ENCODE measurements at regions of chr15 and their contacts with region 1.

Region 1: DNA sequence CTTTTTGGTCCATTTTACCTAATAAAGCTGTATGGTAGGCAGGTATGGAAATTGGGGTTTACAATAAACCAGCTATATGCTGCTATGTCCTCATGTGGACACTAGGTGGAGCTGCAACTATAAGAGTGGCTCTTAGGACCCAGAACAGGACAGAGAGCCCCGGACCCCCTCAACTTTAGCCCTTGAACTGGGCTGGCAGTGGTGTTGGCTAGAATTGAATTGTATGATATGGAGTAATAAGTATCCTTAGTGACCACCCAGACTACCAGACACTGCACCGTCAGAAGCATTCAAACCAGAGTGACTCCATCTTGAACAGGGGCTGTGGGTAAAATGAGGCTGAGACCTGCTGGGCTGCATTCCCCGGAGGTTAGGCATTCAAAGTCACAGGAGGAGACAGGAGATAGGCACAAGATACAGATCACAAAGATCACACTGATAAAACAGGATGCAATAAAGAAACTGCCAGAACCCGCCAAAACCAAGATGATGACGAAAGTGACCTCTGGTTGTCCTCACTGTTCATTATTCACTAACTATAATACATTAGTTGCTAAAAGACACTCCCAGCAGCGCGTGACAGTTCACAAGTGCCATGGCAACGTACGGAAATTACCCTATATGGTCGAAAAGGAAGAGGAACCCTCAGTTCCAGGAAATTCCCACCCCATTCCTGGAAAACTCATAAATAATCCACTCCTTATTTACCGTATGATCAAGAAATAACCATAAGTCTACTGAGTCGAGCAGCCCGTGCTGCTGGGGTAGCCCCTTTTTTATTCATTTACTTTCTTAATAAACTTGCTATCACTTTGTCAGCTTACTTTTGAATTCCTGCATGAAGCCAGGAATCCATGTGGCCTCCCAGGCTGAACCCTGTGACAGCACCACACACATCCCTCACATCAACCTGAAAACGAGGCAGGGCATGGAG is 68.7 kb upstream of the BLM start:
- DNase-seq: peak; percentile 79
- H3K4me3 Mint-ChIP-seq: peak overlapping the region; percentile 6
- H3K27ac Mint-ChIP-seq: peak overlapping the region; percentile 87
- H3K4me1 Mint-ChIP-seq: peaks cover 42% of the 10 kb centered on the region
- H3K27me3 Mint-ChIP-seq: no peaks in the 10 kb centered on the region

Region 2: DNA sequence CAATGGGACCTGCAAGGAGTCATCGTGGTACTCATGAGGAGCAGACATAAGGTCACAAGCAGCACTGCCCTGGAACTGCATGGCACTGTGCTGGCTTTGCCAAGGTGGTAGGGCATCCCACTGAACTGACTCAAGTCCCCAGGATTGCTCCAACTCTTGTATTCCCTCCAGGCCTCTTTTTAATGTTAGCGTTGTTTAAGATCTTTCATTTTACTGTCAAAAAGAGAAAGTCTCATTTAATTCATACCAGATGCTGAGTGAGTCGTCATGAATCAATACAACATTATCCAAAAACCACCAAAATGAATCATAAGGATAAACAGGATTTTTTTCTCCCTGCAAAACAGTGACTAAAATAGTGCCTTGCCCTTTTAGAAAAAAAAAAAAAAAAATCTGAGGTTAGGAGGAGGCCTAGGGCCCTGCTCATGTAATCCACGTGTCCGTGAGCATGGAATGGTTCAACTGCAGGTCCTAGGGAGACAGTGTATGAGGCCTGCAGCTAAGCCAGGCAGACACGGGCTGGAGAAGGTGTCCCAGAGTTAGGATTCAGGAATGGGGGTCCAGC is 32.0 kb after region 1 on chr15:
- intact Hi-C with region 1: loop called (anchors 1 kb)
- DNase-seq: no peak
- H3K4me3 Mint-ChIP-seq: no peak overlapping the region
- H3K27ac Mint-ChIP-seq: peak overlapping the region; percentile 79
- H3K4me1 Mint-ChIP-seq: peaks cover 52% of the 10 kb centered on the region
- H3K27me3 Mint-ChIP-seq: no peaks in the 10 kb centered on the region

Region 3: DNA sequence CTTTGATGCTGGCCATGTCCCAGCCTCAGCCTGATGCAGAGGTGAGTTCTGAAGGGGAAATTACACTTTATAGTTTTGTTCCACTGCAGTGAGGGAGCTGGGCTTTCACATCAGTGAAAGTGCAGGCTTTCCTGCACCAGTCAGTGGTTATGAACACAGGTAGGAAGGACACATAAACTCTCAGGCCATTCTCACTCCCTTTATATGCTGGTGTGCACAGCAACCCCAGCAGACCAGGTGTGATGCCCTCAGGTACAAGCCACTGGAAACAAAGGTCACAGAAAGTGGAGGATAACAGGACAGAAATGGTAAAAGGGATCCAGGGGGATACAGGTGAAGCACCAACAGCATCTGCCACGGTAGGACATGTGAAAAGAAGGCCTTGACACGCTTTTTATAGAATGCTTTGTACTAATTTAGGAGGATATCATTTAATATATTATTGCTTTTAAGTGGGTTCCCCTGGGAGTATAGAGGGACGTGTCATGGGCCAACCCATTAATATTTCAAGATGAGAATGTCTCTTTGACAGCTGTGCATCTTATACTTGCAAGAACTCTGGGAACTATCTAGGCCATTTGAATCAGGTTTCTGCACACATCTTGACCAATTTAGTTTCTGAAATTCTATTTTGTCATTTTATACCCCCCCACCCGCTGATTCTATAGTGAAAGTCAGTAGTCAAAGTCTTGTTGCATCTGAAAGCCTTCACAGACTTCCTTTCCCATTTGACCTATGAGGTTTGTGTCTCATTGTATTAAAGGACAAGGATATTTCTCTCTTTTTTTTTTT is 43.8 kb after region 1 on chr15:
- intact Hi-C with region 1: loop called (anchors 1 kb)
- DNase-seq: no peak
- H3K4me3 Mint-ChIP-seq: no peak overlapping the region
- H3K27ac Mint-ChIP-seq: no peak overlapping the region
- H3K4me1 Mint-ChIP-seq: peaks cover 49% of the 10 kb centered on the region
- H3K27me3 Mint-ChIP-seq: no peaks in the 10 kb centered on the region

Region 4: GRCh38 chr15:90818251-90819210 is 170.1 kb after region 1 on chr15:
- intact Hi-C with region 1: loop called (anchors 5 kb)
- DNase-seq: peak; percentile 37
- H3K4me3 Mint-ChIP-seq: peak overlapping the region; percentile 74
- H3K27ac Mint-ChIP-seq: peak overlapping the region; percentile 97
- H3K4me1 Mint-ChIP-seq: peaks cover 65% of the 10 kb centered on the region
- H3K27me3 Mint-ChIP-seq: no peaks in the 10 kb centered on the region

Region 5: DNA sequence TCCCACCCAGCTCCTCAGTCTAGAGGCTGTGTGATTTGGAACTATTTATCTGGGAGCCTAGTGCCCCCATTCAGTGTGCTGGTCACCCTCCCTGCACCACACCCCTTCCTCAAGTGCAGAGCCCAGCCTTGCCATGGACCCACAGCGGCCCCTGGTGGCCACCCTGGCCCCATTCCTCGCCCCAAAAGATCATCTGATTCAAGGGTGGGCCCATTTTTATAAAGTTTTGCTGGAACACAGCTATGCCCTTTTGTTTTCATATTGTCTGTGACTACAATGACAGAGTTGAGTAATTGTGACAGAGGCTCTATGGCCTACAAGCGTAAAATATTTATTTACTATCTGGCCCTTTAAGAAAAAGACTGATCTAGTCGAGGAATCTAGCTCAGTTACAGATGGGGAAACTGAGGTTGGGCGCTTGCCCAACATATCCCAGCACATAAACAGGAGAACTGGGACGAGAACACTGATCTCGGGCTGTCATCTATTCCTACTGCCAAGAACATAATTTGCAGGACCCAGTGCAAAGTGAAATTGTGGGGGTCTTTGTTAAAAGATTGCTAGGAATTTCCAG is 237.7 kb after region 1 on chr15:
- intact Hi-C with region 1: loop called (anchors 1 kb)
- DNase-seq: peak; percentile 72
- H3K4me3 Mint-ChIP-seq: no peak overlapping the region
- H3K27ac Mint-ChIP-seq: peak overlapping the region; percentile 66
- H3K4me1 Mint-ChIP-seq: peaks cover 30% of the 10 kb centered on the region
- H3K27me3 Mint-ChIP-seq: no peaks in the 10 kb centered on the region

Measured in activated T-helper 2 cell treated with anti-CD3 and anti-CD28 coated beads, Interferon-gamma antibody, Interleukin-2, Interleukin-4, amounts not matched to agents 10 μg/mL and 5 μg/mL and 100 μg/mL, durations not matched to agents 14 hours and 24 hours and 36 hours (primary cell).